CD14-positive monocyte (primary cell): ENCODE measurements at regions of chr10 and their contacts with region 1.

Region 1: DNA sequence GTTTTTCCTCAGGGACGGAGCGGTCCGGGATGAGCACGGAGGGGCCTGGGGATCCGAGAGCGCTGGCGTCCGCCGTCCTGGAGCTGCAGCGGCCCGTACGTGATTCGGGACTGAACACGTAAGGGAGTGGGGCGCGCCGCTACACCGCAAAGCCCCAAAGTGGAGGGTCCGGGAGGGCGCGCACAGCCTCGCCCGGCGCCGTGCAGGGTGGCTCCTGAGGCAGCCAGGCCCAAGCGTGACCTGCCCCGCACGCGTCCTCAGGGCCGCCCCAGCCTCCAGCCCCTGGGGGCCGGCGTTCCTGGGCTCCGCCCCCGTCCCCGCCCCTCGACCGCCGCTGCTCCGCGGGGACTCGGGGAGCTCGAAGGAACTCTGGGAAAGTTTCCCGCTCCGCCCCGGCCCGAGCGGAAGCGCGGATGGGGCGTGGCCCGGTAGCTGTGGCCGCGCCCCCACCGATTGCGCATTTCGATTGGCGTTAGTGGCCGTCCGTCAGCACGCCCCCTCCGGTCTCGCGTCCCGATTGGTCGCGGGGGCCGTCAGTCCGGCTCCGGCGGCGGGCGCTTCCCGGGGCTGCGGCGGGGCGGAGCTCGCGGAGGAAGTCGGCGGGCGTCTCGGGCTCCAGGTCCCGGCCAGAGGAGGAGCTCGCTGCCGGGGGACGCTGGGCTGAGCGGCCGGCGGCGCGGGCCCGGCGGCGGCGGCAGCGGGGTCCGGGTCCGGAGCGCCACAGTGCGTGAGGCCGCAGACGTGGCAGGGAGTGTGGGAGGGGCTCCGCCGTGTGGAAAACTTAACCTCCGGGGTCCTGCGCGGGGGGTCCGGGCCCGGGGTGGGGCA is at the starts of genes ANKRD16 and FBH1:
- DNase-seq: peak; percentile 97 to 98 (median 98)
- H3K4me3 ChIP-seq: peak within 1 kb of the TSS; percentile 63 to 86 (median 72)
- H3K4me3 Mint-ChIP-seq: peak within 1 kb of the TSS; percentile 88 to 93
- H3K27ac ChIP-seq: peak within 1 kb of the TSS; percentile 35 to 70
- H3K27ac Mint-ChIP-seq: peak within 1 kb of the TSS; percentile 57 to 92 (median 82)
- H3K4me1 ChIP-seq: peaks cover 22 to 29% of the 10 kb centered on the region in 2 donors
- H3K4me1 Mint-ChIP-seq: peaks cover 31% of the 10 kb centered on the region
- H3K27me3 ChIP-seq: no peaks in the 10 kb centered on the region
- H3K27me3 Mint-ChIP-seq: peaks cover 0 to under 1% (median 0%) of the 10 kb centered on the region in 3 donors
- CTCF ChIP-seq: no peak
- polyA plus RNA-seq, gene ANKRD16: 1.4 to 2.9 (median 2.1) TPM
- polyA plus RNA-seq, gene FBH1: 33.9 to 73.3 (median 48.3) TPM

Region 2: DNA sequence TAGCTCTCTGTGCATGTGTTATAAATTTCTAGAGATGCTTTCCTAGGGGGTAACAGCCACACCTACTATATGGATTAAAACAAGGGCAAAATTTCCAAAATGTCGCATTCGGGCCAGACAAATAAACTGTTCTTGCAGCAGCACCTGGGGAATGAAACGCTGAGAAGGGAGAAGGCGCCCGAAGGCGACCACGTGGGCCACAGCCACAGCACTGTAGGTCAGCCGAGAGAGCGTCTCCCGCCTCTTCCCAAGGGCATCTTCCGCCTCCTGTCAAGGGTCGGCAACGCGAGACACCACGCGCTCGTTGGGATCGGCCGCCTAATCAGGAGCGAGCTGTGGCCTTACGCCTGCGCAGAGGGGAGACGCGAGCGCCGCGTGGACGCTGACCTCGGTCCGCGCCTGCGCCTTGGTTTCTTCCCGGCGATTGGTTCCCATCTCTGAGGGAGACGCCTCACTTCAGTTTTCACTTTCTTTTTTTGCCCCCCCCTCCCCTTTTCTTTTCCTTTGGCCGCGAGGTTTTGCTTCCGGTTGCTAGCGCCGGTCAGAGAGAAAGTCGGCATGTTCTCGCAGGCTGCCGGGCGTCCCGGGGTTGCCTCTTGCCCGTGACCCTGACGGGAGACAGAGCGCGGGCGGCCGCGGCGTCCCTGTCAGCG is 205.4 kb before region 1 on chr10 and contains the start of gene TASOR2:
- intact Hi-C with region 1: loop called in 1 of 2 experiments (anchors 5 kb)
- DNase-seq: peak; percentile 96 to 98 (median 96)
- H3K4me3 ChIP-seq: peak within 1 kb of the TSS; percentile 76 to 92 (median 81)
- H3K4me3 Mint-ChIP-seq: peak within 1 kb of the TSS; percentile 97 to 98
- H3K27ac ChIP-seq: peak within 1 kb of the TSS; percentile 80 to 93
- H3K27ac Mint-ChIP-seq: peak within 1 kb of the TSS; percentile 90 to 97 (median 95)
- H3K4me1 ChIP-seq: peaks cover 17 to 21% of the 10 kb centered on the region in 2 donors
- H3K4me1 Mint-ChIP-seq: peaks cover 31% of the 10 kb centered on the region
- H3K27me3 ChIP-seq: no peaks in the 10 kb centered on the region
- H3K27me3 Mint-ChIP-seq: peaks cover 0 to 3% (median 2%) of the 10 kb centered on the region in 3 donors
- CTCF ChIP-seq: no peak
- polyA plus RNA-seq, gene TASOR2: 3.2 to 12.3 (median 9.5) TPM

Region 3: DNA sequence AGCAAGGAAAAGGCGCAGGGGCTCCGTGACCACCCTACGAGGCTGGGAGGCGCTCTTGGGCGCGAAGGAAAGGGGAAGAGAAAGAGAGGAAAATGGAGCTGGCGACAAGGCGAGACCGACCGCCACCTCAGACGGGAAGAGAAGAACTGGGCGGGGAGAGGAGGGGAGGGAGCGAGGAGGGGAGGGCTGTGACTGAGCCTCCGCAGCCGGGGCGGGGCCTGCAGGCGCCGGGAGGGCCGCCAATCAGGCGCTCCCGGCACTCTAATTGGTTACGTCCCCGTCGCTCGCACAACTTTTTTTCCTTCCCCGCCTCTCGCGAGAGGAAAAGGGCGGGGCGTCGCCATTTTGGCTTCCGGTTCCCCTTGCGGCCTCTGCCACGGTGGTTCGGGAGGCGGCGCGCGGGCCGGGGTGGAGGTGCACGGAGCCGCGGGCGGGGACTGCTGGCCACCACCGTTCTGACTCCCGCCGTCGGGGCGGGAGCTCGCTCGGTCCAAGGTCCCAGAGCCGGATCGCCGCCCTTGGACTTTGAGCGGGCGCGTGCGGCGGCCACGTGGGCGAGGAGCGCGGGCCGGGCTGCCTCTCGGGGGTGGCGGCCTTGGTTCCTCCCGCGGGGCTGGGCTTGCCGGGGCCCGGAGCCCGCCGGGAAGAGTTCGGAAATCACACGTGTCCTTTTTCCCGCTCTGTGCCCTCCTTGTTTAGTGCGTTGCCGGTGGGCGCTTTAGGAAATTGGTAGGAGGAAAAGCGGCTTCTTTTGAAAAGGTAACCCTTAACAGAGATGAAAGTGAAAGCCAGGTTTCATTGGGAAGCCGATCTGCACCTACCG is 76.3 kb before region 1 on chr10 and contains the start of gene GDI2:
- intact Hi-C with region 1: loop called (anchors 2 to 5 kb)
- DNase-seq: peak; percentile 96
- H3K4me3 ChIP-seq: peak within 1 kb of the TSS; percentile 89 to 96 (median 96)
- H3K4me3 Mint-ChIP-seq: peak within 1 kb of the TSS; percentile 81 to 93
- H3K27ac ChIP-seq: peak within 1 kb of the TSS; percentile 88 to 97
- H3K27ac Mint-ChIP-seq: peak within 1 kb of the TSS; percentile 86 to 96 (median 96)
- H3K4me1 ChIP-seq: peaks cover 47 to 62% of the 10 kb centered on the region in 2 donors
- H3K4me1 Mint-ChIP-seq: peaks cover 59% of the 10 kb centered on the region
- H3K27me3 ChIP-seq: no peaks in the 10 kb centered on the region
- H3K27me3 Mint-ChIP-seq: peaks cover 0 to 2% (median 0%) of the 10 kb centered on the region in 3 donors
- CTCF ChIP-seq: no peak
- polyA plus RNA-seq, gene GDI2: 100 to 320 (median 316) TPM

Region 4: GRCh38 chr10:5977471-5978229 is 87.8 kb after region 1 on chr10 and contains the start of gene IL15RA:
- intact Hi-C with region 1: loop called in 1 of 2 experiments (anchors 2 kb)
- DNase-seq: peak; percentile 78 to 90 (median 80)
- H3K4me3 ChIP-seq: peak within 1 kb of the TSS; percentile 71 to 97 (median 96)
- H3K4me3 Mint-ChIP-seq: peak within 1 kb of the TSS; percentile 98 to 99
- H3K27ac ChIP-seq: peak within 1 kb of the TSS; percentile 68 to 86
- H3K27ac Mint-ChIP-seq: peak within 1 kb of the TSS; percentile 89 to 95 (median 93)
- H3K4me1 ChIP-seq: peaks cover 13 to 25% of the 10 kb centered on the region in 2 donors
- H3K4me1 Mint-ChIP-seq: peaks cover 25% of the 10 kb centered on the region
- H3K27me3 ChIP-seq: peaks cover 0 to 3% of the 10 kb centered on the region in 2 donors
- H3K27me3 Mint-ChIP-seq: peaks cover 5 to 8% (median 7%) of the 10 kb centered on the region in 3 donors
- CTCF ChIP-seq: no peak
- polyA plus RNA-seq, gene IL15RA: 12.4 to 23.1 (median 12.6) TPM